PC-3 (cell line): ENCODE measurements at regions of chr9 and their contacts with region 1.

Region 1: DNA sequence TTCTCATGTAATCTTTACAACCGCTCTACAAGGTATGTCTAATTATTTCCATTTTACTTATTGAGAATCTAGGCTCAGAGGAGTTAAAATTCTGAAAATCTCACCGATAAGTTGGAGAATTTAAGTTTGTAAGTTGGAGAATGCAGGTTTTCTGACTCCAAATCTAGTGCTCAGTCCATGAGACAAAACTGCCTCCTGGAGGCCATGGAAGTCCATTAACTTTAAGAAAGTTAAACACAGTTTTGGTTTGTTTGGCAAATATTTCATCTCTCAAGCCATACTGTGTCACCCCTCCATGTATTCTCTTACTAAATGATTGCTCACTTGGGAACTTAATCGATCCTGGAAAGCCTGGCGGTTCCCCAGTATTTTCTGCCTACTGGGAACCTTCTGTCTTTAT is 52.6 kb downstream of the INIP start:
- DNase-seq: peak; percentile 40
- ATAC-seq: peak; percentile 48
- H3K4me3 ChIP-seq: no peak overlapping the region
- H3K27ac ChIP-seq: no peak overlapping the region
- H3K4me1 ChIP-seq: peaks cover 4% of the 10 kb centered on the region; the same call in 1 of the 2 replicates
- H3K27me3 ChIP-seq: no peaks in the 10 kb centered on the region
- CTCF ChIP-seq: peak; percentile 52

Region 2: GRCh38 chr9:112443200-112443599 is 222.1 kb before region 1 on chr9:
- CTCF ChIA-PET with region 1: no interaction called
- POLR2A ChIA-PET with region 1: no interaction called
- intact Hi-C with region 1: loop called (anchors 1 kb)
- DNase-seq: peak; percentile 18
- ATAC-seq: no peak
- H3K4me3 ChIP-seq: no peak overlapping the region
- H3K27ac ChIP-seq: no peak overlapping the region
- H3K4me1 ChIP-seq: no peaks in the 10 kb centered on the region
- H3K27me3 ChIP-seq: no peaks in the 10 kb centered on the region
- CTCF ChIP-seq: peak; percentile 61